CD8-positive, alpha-beta T cell (primary cell): ENCODE measurements at regions of chr11 and their contacts with region 1.

Region 1: DNA sequence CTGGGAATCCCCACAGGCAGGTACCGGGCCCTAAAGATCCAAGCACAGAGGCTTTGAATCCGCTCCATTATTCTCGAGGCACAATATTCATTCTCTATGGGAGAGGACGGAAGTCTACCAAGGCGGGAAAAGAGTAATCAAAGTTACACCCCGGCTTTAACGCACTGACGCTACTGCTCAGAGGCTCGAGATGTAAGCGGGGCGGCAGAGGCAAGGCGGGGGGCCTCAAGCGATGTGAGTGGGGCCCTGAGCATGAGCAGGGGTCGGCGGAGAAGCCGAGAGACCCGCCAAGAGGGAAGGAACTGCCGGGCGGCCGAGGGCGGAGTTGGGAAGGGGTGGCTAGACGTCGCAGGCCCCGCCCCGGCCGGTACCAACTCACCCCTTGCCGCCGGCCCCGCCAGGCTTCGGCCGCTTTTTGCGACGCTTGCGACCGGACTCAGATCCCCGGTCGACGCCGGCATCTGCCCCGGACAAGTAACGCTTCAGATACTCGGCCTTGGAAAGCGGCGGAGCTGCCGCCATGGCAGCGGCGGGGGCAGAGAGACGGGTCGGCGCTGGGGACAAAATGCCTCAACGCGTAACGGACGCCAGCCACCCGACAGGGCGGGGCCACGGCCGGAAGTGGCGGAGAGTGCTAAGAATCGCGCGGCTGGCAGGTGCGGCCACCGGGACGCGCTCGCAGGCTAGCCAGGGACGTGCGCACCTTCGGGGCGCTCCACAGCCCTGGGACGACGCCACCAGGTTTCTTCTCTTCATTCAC is at the start of gene BUD13:
- DNase-seq: peak; percentile 88 to 96 (median 96)
- ATAC-seq: peak; percentile 92
- H3K4me3 ChIP-seq: peak within 1 kb of the TSS; percentile 97 to 98
- H3K4me3 Mint-ChIP-seq: peak within 1 kb of the TSS; percentile 97
- H3K27ac ChIP-seq: peak within 1 kb of the TSS; percentile 87 to 95
- H3K27ac Mint-ChIP-seq: peak within 1 kb of the TSS; percentile 97
- H3K4me1 ChIP-seq: peaks cover 24% of the 10 kb centered on the region
- H3K4me1 Mint-ChIP-seq: peaks cover 35% of the 10 kb centered on the region
- H3K27me3 ChIP-seq: no peaks in the 10 kb centered on the region
- H3K27me3 Mint-ChIP-seq: no peaks in the 10 kb centered on the region
- CTCF ChIP-seq: no peak
- total RNA-seq, gene BUD13: 12.5 TPM

Region 2: GRCh38 chr11:116703421-116703820 is 69.2 kb before region 1 on chr11:
- CTCF ChIA-PET with region 1: no interaction called
- POLR2A ChIA-PET with region 1: no interaction called
- intact Hi-C with region 1: no loop called
- DNase-seq: peak in 1 of 9 experiments; percentile 23
- ATAC-seq: no peak
- H3K4me3 ChIP-seq: no peak overlapping the region
- H3K4me3 Mint-ChIP-seq: no peak overlapping the region
- H3K27ac ChIP-seq: no peak overlapping the region
- H3K27ac Mint-ChIP-seq: peak overlapping the region; percentile 49
- H3K4me1 ChIP-seq: no peaks in the 10 kb centered on the region
- H3K4me1 Mint-ChIP-seq: peaks cover 7% of the 10 kb centered on the region
- H3K27me3 ChIP-seq: no peaks in the 10 kb centered on the region
- H3K27me3 Mint-ChIP-seq: peaks cover 6% of the 10 kb centered on the region
- CTCF ChIP-seq: no peak

Region 3: DNA sequence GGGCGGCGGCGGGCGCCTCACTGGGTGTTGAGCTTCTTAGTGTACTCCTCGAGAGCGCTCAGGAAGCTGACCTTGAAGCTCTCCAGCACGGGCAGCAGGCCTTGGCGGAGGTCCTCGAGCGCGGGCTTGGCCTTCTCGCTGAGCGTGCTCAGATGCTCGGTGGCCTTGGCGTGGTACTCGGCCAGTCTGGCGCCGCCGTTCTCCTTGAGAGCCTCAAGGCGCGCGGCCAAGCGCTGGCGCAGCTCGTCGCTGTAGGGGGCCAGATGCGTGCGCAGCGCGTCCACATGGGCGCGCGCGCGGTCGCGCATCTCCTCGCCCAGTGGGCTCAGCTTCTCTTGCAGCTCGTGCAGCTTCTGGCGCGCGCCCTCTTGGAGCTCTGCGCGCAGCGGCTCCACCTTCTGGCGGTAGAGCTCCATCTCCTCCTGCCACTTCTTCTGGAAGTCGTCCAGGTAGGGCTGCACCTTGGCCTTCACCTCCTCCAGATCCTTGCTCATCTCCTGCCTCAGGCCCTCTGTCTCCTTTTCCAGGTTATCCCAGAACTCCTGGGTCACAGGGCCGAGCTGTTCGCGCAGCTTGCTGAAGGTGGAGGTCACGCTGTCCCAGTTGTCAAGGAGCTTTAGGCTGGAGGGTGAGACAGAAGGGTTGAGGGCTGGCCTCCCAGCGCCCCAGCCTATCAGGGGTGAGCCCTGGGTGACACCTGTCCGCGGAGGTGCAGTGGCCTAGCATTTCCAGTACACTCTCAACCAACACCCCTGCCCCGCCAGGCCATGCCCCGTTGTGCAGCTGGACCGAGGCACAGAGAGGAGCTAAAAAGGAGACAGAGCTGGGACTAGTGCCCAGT is 63.4 kb after region 1 on chr11:
- CTCF ChIA-PET with region 1: interaction called, 10 read pairs
- POLR2A ChIA-PET with region 1: interaction called, 13 read pairs
- intact Hi-C with region 1: loop called (anchors 1 kb)
- DNase-seq: peak; percentile 65 to 92 (median 82)
- ATAC-seq: peak; percentile 97
- H3K4me3 ChIP-seq: peak overlapping the region; percentile 63 to 64
- H3K4me3 Mint-ChIP-seq: peak overlapping the region; percentile 84
- H3K27ac ChIP-seq: peak overlapping the region; percentile 57 to 63
- H3K27ac Mint-ChIP-seq: peak overlapping the region; percentile 70
- H3K4me1 ChIP-seq: peaks cover 16% of the 10 kb centered on the region
- H3K4me1 Mint-ChIP-seq: peaks cover 14% of the 10 kb centered on the region
- H3K27me3 ChIP-seq: no peaks in the 10 kb centered on the region
- H3K27me3 Mint-ChIP-seq: no peaks in the 10 kb centered on the region
- CTCF ChIP-seq: peak; percentile 54

Region 4: GRCh38 chr11:117143871-117144476 is 371.4 kb after region 1 on chr11 and contains the start of gene PAFAH1B2:
- CTCF ChIA-PET with region 1: no interaction called
- POLR2A ChIA-PET with region 1: interaction called, 6 read pairs
- intact Hi-C with region 1: loop called in 1 of 2 experiments (anchors 5 kb)
- DNase-seq: peak; percentile 87 to 97 (median 95)
- ATAC-seq: peak; percentile 82
- H3K4me3 ChIP-seq: peak within 1 kb of the TSS; percentile 74 to 78
- H3K4me3 Mint-ChIP-seq: peak within 1 kb of the TSS; percentile 95
- H3K27ac ChIP-seq: peak within 1 kb of the TSS; percentile 69 to 75
- H3K27ac Mint-ChIP-seq: peak within 1 kb of the TSS; percentile 95
- H3K4me1 ChIP-seq: peaks cover 16% of the 10 kb centered on the region
- H3K4me1 Mint-ChIP-seq: peaks cover 44% of the 10 kb centered on the region
- H3K27me3 ChIP-seq: peaks cover 0 to 3% of the 10 kb centered on the region in 2 experiments
- H3K27me3 Mint-ChIP-seq: peaks cover 5% of the 10 kb centered on the region
- CTCF ChIP-seq: no peak
- total RNA-seq, gene PAFAH1B2: 52.1 to 55.9 TPM

Region 5: GRCh38 chr11:117232092-117232878 is 459.7 kb after region 1 on chr11 and contains the start of gene RNF214:
- CTCF ChIA-PET with region 1: no interaction called
- POLR2A ChIA-PET with region 1: interaction called, 5 read pairs
- intact Hi-C with region 1: loop called (anchors 2 to 5 kb)
- DNase-seq: peak; percentile 51 to 89 (median 72)
- ATAC-seq: peak; percentile 75
- H3K4me3 ChIP-seq: peak within 1 kb of the TSS; percentile 70 to 91
- H3K4me3 Mint-ChIP-seq: peak within 1 kb of the TSS; percentile 96
- H3K27ac ChIP-seq: peak within 1 kb of the TSS; percentile 94 to 97
- H3K27ac Mint-ChIP-seq: peak within 1 kb of the TSS; percentile 98
- H3K4me1 ChIP-seq: peaks cover 30% of the 10 kb centered on the region
- H3K4me1 Mint-ChIP-seq: peaks cover 44% of the 10 kb centered on the region
- H3K27me3 ChIP-seq: no peaks in the 10 kb centered on the region
- H3K27me3 Mint-ChIP-seq: no peaks in the 10 kb centered on the region
- CTCF ChIP-seq: peak; percentile 64
- total RNA-seq, gene RNF214: 10.8 to 11.7 TPM